WTC11 (cell line): ENCODE measurements at regions of chr2 and their contacts with region 1.

Region 1: DNA sequence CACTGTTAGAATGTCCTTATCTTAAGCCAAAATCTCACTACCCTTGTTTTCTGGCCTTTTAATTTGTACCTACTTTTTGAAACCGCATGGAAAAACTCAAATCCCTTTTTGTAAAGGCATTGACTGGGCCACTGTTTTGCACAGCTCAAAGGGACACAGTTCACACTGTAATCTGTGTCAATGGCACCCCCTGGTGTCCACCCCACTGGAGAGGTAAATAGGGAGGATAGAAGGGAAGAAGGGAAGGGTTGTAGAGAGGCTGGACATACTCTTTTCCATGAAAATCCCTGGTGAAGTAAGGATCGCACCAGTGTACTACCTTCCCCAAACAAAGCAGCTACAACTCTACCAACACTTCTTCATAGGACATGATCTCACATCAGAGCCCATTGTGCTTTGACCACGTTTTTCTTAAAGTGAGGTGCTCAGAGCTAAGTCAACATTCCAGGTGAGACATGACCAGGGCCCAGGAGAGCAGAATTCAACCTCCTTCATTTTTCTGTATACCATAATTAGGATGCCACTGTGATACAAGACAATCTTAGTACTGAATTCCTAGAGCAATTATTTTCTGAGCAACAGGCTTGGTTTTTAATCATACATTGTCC is 92.4 kb upstream of the RMDN2 start:
- DNase-seq: peak; percentile 88
- ATAC-seq: peak; percentile 98
- H3K4me3 Mint-ChIP-seq: no peak overlapping the region
- H3K27ac Mint-ChIP-seq: no peak overlapping the region
- H3K4me1 Mint-ChIP-seq: peaks cover 9% of the 10 kb centered on the region
- H3K27me3 Mint-ChIP-seq: no peaks in the 10 kb centered on the region
- CTCF ChIP-seq: peak; percentile 55

Region 2: GRCh38 chr2:37414470-37414949 is 418.2 kb before region 1 on chr2:
- CTCF ChIA-PET with region 1: interaction called, 54 read pairs
- POLR2A ChIA-PET with region 1: no interaction called
- DNase-seq: no peak
- ATAC-seq: peak; percentile 92
- H3K4me3 Mint-ChIP-seq: no peak overlapping the region
- H3K27ac Mint-ChIP-seq: no peak overlapping the region
- H3K4me1 Mint-ChIP-seq: peaks cover 13% of the 10 kb centered on the region
- H3K27me3 Mint-ChIP-seq: no peaks in the 10 kb centered on the region; the same call in 1 of the 2 replicates
- CTCF ChIP-seq: peak; percentile 45